Heart left ventricle (tissue), 16 donors: ENCODE measurements at regions of chr16 and their contacts with region 1.

Region 1: DNA sequence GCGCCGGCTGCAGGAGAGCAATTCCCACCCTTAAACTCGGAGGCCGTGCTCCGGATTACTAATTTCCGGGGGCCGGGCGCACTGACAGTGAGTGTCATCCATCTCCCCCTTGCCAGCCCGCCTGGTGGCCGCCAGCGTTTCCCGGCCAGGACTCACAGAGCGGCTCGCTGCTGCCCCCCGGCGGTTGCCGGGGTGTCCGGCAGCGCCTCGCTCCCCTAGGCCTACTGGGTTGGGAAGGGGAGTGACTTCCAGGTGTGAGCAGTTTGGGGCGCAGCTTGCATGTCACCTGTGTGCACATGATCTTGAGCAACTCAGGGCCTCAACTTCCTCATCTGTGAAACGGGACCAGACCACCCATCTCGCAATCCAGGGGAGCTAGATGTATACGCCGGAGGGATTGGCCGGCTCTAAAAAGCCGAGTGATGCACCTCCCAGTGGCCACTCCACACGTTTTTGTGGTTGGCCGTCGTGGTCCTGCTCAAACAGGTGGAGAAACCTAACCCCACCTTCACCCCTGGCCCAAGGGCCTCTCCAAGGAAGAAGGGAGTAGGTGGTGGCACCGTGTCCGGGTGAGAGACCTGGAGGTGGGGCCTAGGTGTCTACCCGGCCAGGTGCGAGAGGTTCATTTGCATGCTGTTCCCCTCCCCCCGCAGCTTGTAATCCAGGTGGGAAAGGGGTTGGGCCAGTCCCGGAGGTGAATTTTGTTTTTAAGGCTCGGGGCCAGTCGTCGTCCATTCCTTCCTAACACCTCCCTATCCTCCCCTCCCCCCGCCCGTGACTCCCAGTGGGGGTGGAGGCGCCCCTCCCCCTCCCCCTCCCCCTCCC is 2.4 kb upstream of the GSE1 start:
- DNase-seq: peak; percentile 84 to 93 (median 87)
- ATAC-seq: peak; percentile 23 to 51 (median 39)
- H3K4me3 ChIP-seq: peak overlapping the region in 11 of 12 donors; percentile 53 to 82 (median 71)
- H3K27ac ChIP-seq: peak overlapping the region in 11 of 12 donors; percentile 85 to 98 (median 94)
- H3K4me1 ChIP-seq: peaks cover 9 to 74% (median 52%) of the 10 kb centered on the region in 12 donors
- H3K27me3 ChIP-seq: no peaks in the 10 kb centered on the region
- CTCF ChIP-seq: peak; percentile 97 to 100 (median 99)
- POLR2A ChIP-seq: no peak

Region 2: DNA sequence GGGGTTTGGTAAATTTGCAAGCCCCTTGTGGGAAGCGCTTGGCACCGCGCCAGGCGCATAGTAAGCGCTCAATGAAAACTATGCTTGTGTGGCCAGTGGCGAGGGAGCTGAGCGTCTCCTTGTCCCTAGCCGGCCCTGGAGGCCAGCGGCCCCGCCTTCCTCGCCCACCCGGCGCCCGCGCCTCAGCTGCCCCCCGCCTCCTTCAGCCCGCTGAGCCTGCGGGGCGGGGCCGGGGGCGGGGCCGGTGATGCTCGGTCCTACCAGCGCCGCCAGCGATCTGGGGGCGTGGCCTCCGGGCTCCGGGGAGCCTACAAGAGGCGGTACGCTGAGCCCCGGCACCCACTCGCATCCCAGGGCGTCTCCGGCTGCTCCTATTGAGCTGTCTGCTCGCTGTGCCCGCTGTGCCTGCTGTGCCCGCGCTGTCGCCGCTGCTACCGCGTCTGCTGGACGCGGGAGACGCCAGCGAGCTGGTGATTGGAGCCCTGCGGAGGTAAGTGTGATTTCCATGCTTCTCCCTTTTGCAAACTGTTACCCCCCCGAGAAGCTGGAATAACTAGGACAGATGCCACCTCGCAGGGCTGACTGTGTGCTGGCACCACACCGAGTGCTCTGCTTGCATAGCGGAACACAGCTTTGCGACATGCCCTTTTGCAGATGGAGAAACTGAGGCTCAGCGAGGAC is 790.9 kb before region 1 on chr16 and contains the start of gene CRISPLD2:
- intact Hi-C with region 1: no loop called
- DNase-seq: peak; percentile 91 to 97 (median 96)
- ATAC-seq: peak; percentile 82 to 97 (median 93)
- H3K4me3 ChIP-seq: peak within 1 kb of the TSS; percentile 9 to 84 (median 62)
- H3K27ac ChIP-seq: peak within 1 kb of the TSS in 9 of 12 donors; percentile 20 to 97 (median 75)
- H3K4me1 ChIP-seq: peaks cover 0 to 42% (median 8%) of the 10 kb centered on the region in 12 donors
- H3K27me3 ChIP-seq: peaks cover 0 to 9% (median 0%) of the 10 kb centered on the region in 9 donors
- CTCF ChIP-seq: no peak
- POLR2A ChIP-seq: peak; percentile 71 to 95
- total RNA-seq, gene CRISPLD2: 8.0 to 153 (median 12.9) TPM

Region 3: DNA sequence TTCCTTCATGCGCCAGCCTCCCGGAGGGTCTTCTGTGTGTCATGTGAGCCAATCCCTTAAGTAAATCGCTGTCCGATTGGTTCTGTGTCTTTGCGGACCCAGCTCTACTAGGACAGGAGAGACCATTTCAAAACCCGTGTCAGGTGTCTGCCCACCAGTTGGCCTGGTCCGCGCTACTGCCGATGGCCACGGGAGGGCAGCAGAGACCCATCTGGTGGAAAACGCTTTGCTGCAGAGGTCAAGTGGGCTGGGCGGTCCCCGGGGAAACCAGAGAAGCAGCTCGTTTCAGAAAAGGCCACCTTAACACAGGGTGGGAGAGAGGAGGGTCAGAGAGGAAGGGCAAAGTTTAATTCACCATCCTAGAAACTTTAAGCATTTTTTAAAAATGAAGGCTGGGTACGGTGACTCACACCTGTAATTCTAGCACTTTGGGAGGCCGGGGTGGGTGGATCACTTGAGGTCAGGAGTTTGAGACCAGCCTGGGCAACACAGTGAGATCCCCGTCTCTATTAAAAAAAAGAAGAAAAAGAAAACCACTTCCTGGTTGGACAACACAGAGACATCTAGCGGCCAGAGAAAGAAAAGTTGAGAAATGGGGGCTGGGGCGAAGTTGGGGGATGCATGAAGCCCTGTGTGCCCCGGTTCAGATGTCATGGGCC is 495.7 kb before region 1 on chr16:
- intact Hi-C with region 1: loop called in 3 of 10 experiments (anchors 5 to 10 kb)
- DNase-seq: peak; percentile 86 to 94 (median 88)
- ATAC-seq: peak; percentile 70 to 91 (median 86)
- H3K4me3 ChIP-seq: peak overlapping the region in 4 of 12 donors; percentile 23 to 40 (median 29)
- H3K27ac ChIP-seq: peak overlapping the region in 7 of 12 donors; percentile 23 to 60 (median 49)
- H3K4me1 ChIP-seq: peaks cover 0 to 9% (median 1%) of the 10 kb centered on the region in 12 donors
- H3K27me3 ChIP-seq: no peaks in the 10 kb centered on the region
- CTCF ChIP-seq: peak; percentile 85 to 99 (median 96)
- POLR2A ChIP-seq: no peak

Region 4: DNA sequence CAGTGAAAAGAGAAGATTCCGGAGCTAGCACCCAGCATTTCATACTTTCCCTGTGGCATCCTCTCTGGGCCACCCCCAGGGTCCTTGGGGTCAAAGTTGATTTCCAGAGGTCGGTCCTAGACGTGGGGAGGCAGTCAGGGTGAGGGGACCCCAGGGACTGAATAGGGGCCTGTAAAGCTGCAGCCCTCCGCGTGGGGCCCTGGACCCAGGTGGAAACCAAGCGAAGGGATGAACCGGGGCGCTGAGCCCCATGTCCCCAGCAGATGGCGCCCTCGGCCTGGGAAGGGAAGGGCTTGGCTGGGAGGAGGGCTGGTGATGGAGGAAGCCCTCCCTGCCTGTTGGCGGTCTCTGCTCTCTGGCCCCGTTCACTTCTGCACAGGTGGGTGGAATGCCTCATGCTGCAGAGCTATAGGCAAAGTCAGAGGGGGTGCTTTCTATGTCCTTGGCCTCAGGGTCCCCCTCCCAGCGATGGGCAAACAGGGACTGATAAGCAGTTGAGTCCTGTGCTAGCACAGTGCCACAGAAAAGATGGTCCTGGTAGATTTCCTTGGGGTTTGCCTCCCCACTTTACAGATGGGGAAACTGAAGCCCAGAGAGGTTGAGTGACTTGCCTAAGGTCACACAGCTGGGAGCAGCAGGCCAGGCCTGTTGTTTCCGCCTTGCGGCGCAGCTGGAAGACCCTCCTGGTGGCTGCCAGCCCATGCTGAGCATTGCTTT is 335.0 kb before region 1 on chr16:
- intact Hi-C with region 1: loop called in 5 of 10 experiments (anchors 5 to 10 kb)
- DNase-seq: peak; percentile 60 to 85 (median 65)
- ATAC-seq: peak; percentile 42 to 80 (median 72)
- H3K4me3 ChIP-seq: no peak overlapping the region
- H3K27ac ChIP-seq: no peak overlapping the region
- H3K4me1 ChIP-seq: peaks cover 0 to 8% (median 0%) of the 10 kb centered on the region in 12 donors
- H3K27me3 ChIP-seq: no peaks in the 10 kb centered on the region
- CTCF ChIP-seq: peak; percentile 82 to 93 (median 89)
- POLR2A ChIP-seq: no peak

Region 5: GRCh38 chr16:85316321-85316919 is 294.3 kb before region 1 on chr16:
- intact Hi-C with region 1: loop called in 2 of 10 experiments (anchors 10 kb)
- DNase-seq: peak in 4 of 5 donors; percentile 51 to 67 (median 59)
- ATAC-seq: peak; percentile 73 to 80 (median 75)
- H3K4me3 ChIP-seq: no peak overlapping the region
- H3K27ac ChIP-seq: no peak overlapping the region
- H3K4me1 ChIP-seq: peaks cover 0 to 32% (median 18%) of the 10 kb centered on the region in 12 donors
- H3K27me3 ChIP-seq: no peaks in the 10 kb centered on the region
- CTCF ChIP-seq: peak; percentile 71 to 89 (median 79)
- POLR2A ChIP-seq: no peak

Region 6: DNA sequence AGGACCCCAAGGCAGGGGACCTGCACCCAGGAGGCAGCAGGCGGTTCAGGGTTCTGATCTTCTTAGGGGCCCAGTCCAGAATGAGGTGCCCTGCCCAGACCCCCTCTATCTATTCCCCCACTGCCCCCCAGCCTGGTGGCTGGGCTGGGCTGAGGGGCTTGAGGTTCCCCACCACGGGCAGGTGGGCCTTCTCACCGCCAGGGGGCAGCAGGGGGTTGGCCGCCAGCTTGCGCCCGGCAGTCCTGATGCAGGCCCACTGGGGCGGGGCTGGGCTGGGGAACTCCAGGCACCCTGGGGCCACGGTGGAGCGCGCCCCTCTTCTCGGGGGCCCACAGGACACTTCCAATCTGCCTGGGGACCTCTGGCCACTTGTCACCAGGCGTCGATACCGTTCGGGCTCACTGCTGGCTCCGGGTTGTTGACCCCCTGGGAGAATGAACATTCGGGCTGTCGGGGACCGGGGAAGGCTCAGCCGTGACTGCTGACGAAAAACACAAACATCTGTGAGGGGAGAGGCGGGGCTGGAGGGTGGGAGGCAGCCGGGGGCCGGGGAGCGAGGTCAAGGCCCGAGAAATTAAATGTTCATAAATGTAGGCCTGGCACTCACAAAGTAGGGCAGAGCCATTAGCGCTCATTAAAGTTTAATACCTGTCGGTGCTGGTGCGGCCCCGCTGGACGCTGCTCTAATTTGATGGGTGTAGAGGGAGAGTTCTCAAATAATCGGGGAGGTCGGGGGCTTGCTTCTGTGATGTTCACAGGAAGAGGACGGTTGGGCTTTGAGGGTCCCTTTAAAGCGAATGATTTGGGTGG is 216.8 kb before region 1 on chr16:
- intact Hi-C with region 1: loop called in 5 of 10 experiments (anchors 5 to 10 kb)
- DNase-seq: peak; percentile 62 to 85 (median 65)
- ATAC-seq: peak in 2 of 4 donors; percentile 24 to 48
- H3K4me3 ChIP-seq: no peak overlapping the region
- H3K27ac ChIP-seq: peak overlapping the region in 1 of 12 donors; percentile 87
- H3K4me1 ChIP-seq: peaks cover 8 to 41% (median 25%) of the 10 kb centered on the region in 12 donors
- H3K27me3 ChIP-seq: no peaks in the 10 kb centered on the region
- CTCF ChIP-seq: peak; percentile 79 to 92 (median 86)
- POLR2A ChIP-seq: no peak

Region 7: DNA sequence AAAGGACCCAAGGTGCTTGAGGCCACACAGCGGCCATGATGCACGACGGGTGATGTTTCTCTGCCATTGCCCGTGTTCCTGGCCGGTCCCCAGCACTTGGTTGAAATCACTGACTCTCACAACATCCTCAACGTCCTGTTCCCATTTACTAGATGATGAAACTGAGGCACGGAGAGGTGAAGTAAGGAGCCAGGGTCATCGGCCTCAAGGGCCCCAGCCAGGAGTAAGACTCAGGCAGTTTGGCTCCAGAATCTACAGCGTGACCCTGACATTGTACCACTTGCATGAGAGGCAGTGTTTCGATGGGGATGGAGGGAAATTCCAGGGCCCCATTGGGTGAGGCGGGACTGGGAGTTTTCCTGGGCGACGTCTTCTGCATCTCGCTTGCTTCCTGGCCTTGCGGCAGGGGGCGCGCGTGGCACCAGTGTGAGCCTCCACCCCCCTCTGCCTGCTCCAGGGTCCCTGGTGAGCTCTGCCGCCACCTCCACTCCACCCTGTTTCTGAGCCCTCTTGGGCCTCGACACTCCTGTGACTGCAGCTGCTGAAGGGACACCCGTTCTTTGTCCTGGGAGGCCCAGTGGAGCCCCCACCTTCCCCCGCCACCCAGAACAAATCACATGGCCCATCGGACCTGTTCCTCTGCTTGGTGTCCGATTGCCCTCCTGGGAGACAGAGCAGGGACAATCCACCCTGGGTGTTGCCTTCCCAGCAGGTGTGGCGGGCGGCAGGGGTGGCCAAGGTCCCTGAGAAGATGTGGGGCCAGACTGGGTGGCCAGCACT is 130.6 kb before region 1 on chr16:
- intact Hi-C with region 1: loop called in 1 of 10 experiments (anchors 10 kb)
- DNase-seq: no peak
- ATAC-seq: peak in 2 of 4 donors; percentile 36 to 38
- H3K4me3 ChIP-seq: no peak overlapping the region
- H3K27ac ChIP-seq: no peak overlapping the region
- H3K4me1 ChIP-seq: peaks cover 0 to 3% (median 0%) of the 10 kb centered on the region in 12 donors
- H3K27me3 ChIP-seq: no peaks in the 10 kb centered on the region
- CTCF ChIP-seq: peak in 10 of 12 donors; percentile 8 to 47 (median 26)
- POLR2A ChIP-seq: no peak

Region 8: GRCh38 chr16:85564277-85565051 is 46.3 kb before region 1 on chr16:
- intact Hi-C with region 1: loop called in 4 of 10 experiments (anchors 2 to 5 kb)
- DNase-seq: no peak
- ATAC-seq: no peak
- H3K4me3 ChIP-seq: no peak overlapping the region
- H3K27ac ChIP-seq: peak overlapping the region in 4 of 12 donors; percentile 34 to 66 (median 62)
- H3K4me1 ChIP-seq: peaks cover 0 to 71% (median 30%) of the 10 kb centered on the region in 12 donors
- H3K27me3 ChIP-seq: no peaks in the 10 kb centered on the region
- CTCF ChIP-seq: peak in 11 of 12 donors; percentile 15 to 47 (median 40)
- POLR2A ChIP-seq: no peak

Region 9: DNA sequence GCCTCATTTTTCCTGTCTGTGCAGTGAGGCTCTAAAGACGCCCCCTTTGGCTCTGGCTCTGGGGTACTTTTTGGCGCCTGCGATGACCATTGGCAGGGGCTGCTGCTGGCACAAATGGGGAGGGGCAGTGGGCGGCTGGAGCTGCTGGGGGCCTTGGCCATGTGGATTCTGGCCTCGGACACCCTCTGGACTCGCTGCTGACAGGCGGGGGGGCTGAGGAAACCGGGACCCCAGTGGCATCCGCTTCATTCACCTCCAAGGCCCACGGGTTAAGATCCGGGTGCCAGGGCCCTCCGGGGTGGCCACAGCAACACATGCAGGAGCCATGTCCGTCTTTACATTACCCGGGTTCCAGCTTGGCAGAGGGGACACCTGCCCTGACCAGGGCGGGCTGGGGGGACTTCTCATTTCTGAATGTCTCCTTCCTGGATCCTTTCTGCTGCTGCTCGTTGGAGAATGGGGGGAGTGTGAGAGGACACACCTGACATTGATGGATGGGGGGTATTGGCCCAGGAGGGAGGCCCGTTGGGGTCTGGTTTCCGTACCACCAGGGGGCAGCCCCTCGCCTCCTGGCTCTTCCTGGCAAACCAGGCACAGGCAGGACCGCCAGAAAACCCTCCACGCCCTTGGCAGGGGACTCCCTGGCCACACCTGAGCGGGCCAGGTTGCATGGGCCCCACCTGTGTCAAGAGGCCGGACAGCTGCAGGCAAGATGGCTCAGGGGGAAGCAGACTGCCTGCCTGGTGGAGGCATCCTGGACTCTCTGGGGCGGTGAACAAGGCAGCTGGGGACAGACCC is 24.2 kb after region 1 on chr16:
- intact Hi-C with region 1: no loop called
- DNase-seq: no peak
- ATAC-seq: no peak
- H3K4me3 ChIP-seq: no peak overlapping the region
- H3K27ac ChIP-seq: no peak overlapping the region
- H3K4me1 ChIP-seq: peaks cover 0 to 69% (median 19%) of the 10 kb centered on the region in 12 donors
- H3K27me3 ChIP-seq: no peaks in the 10 kb centered on the region
- CTCF ChIP-seq: no peak
- POLR2A ChIP-seq: no peak